ENCODE measurements at regions of chr2 and their contacts with region 1.

Region 1: GRCh38 chr2:213151437-213152064 is at the start of gene IKZF2:
- DNase-seq: peak; percentile 77
- H3K4me3 Mint-ChIP-seq: peak within 1 kb of the TSS; percentile 86
- H3K27ac Mint-ChIP-seq: peak within 1 kb of the TSS; percentile 91
- H3K4me1 Mint-ChIP-seq: peaks cover 18% of the 10 kb centered on the region
- H3K27me3 Mint-ChIP-seq: no peaks in the 10 kb centered on the region
- CTCF ChIP-seq: no peak
- total RNA-seq, gene IKZF2: 6.0 and 8.8 TPM in 2 replicates

Region 2: GRCh38 chr2:212686285-212686895 is 465.2 kb before region 1 on chr2:
- CTCF ChIA-PET with region 1: interaction called, 42 read pairs
- POLR2A ChIA-PET with region 1: interaction called, 8 read pairs
- intact Hi-C with region 1: loop called (anchors 1 kb)
- DNase-seq: peak; percentile 75
- H3K4me3 Mint-ChIP-seq: no peak overlapping the region
- H3K27ac Mint-ChIP-seq: no peak overlapping the region
- H3K4me1 Mint-ChIP-seq: peaks cover 6% of the 10 kb centered on the region
- H3K27me3 Mint-ChIP-seq: no peaks in the 10 kb centered on the region
- CTCF ChIP-seq: peak; percentile 91

Region 3: GRCh38 chr2:212863185-212863588 is 288.4 kb before region 1 on chr2:
- CTCF ChIA-PET with region 1: interaction called, 6 read pairs
- POLR2A ChIA-PET with region 1: no interaction called
- intact Hi-C with region 1: loop called (anchors 1 kb)
- DNase-seq: peak; percentile 53
- H3K4me3 Mint-ChIP-seq: no peak overlapping the region
- H3K27ac Mint-ChIP-seq: no peak overlapping the region
- H3K4me1 Mint-ChIP-seq: no peaks in the 10 kb centered on the region
- H3K27me3 Mint-ChIP-seq: no peaks in the 10 kb centered on the region
- CTCF ChIP-seq: peak; percentile 40

Region 4: DNA sequence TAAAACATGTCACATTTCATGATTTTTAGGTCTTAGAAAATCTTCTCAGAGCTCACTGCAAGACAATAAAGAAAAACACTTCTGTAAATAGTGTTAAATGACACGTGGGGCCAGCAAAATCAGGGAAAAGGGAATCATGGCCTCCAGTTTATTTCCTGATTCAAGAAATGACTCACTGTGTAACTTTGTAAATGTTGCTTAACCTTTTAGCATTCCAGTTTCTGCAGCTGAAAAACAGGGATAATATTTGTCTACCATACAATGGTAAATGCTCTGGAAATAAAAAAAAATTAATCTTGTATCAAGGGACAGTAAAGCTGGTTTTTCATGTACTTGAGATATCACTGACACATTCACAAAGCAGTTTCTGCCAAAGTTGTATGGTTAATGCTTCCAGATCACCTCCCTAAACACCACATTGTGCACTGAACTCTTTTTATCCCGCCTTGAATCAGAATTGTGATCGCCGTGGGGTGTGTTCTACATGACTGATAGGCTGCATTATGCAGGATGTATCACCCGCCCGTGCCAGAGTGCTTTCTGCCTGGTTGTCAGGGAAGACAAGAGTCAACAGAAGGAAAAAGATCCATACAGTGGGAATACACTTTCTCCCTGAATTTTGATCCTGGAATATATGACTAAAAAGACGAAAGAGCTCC is 239.0 kb before region 1 on chr2:
- CTCF ChIA-PET with region 1: interaction called, 4 read pairs
- POLR2A ChIA-PET with region 1: interaction called, 25 read pairs
- intact Hi-C with region 1: no loop called
- DNase-seq: peak; percentile 82
- H3K4me3 Mint-ChIP-seq: peak overlapping the region; percentile 17
- H3K27ac Mint-ChIP-seq: peak overlapping the region; percentile 97
- H3K4me1 Mint-ChIP-seq: peaks cover 35% of the 10 kb centered on the region
- H3K27me3 Mint-ChIP-seq: no peaks in the 10 kb centered on the region
- CTCF ChIP-seq: no peak

Region 5: GRCh38 chr2:212974692-212975091 is 176.9 kb before region 1 on chr2:
- CTCF ChIA-PET with region 1: interaction called, 3 read pairs
- POLR2A ChIA-PET with region 1: interaction called, 10 read pairs
- intact Hi-C with region 1: no loop called
- DNase-seq: peak; percentile 62
- H3K4me3 Mint-ChIP-seq: no peak overlapping the region
- H3K27ac Mint-ChIP-seq: peak overlapping the region; percentile 3
- H3K4me1 Mint-ChIP-seq: peaks cover 11% of the 10 kb centered on the region
- H3K27me3 Mint-ChIP-seq: no peaks in the 10 kb centered on the region
- CTCF ChIP-seq: no peak

Region 6: DNA sequence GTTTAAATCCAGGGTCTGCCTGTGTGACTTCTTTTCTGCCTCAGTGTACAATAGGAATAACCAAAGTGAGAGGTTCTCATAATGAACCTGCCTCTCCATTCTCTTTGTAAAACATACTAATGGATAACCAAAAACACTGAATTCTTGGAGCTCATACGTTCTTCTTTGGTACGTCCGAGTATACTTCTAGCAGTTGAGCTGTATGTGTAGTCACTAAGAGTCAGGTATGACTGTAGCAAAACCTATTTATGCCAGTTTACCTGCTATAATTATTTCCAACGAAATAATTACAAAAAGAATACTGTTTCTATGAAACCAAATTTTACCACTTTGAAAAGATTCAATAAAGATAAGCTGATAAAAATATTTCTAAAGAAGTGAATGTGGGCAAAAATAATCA is 109.3 kb before region 1 on chr2:
- CTCF ChIA-PET with region 1: no interaction called
- POLR2A ChIA-PET with region 1: no interaction called
- intact Hi-C with region 1: no loop called
- DNase-seq: no peak
- H3K4me3 Mint-ChIP-seq: no peak overlapping the region
- H3K27ac Mint-ChIP-seq: no peak overlapping the region
- H3K4me1 Mint-ChIP-seq: no peaks in the 10 kb centered on the region
- H3K27me3 Mint-ChIP-seq: no peaks in the 10 kb centered on the region
- CTCF ChIP-seq: no peak

Region 7: GRCh38 chr2:213129311-213129710 is 22.2 kb before region 1 on chr2:
- CTCF ChIA-PET with region 1: interaction called, 12 read pairs
- POLR2A ChIA-PET with region 1: interaction called, 4 read pairs
- intact Hi-C with region 1: no loop called
- DNase-seq: no peak
- H3K4me3 Mint-ChIP-seq: no peak overlapping the region
- H3K27ac Mint-ChIP-seq: no peak overlapping the region
- H3K4me1 Mint-ChIP-seq: peaks cover 19% of the 10 kb centered on the region
- H3K27me3 Mint-ChIP-seq: no peaks in the 10 kb centered on the region
- CTCF ChIP-seq: no peak